ENCODE measurements at regions of chr2 and their contacts with region 1.

Region 1: DNA sequence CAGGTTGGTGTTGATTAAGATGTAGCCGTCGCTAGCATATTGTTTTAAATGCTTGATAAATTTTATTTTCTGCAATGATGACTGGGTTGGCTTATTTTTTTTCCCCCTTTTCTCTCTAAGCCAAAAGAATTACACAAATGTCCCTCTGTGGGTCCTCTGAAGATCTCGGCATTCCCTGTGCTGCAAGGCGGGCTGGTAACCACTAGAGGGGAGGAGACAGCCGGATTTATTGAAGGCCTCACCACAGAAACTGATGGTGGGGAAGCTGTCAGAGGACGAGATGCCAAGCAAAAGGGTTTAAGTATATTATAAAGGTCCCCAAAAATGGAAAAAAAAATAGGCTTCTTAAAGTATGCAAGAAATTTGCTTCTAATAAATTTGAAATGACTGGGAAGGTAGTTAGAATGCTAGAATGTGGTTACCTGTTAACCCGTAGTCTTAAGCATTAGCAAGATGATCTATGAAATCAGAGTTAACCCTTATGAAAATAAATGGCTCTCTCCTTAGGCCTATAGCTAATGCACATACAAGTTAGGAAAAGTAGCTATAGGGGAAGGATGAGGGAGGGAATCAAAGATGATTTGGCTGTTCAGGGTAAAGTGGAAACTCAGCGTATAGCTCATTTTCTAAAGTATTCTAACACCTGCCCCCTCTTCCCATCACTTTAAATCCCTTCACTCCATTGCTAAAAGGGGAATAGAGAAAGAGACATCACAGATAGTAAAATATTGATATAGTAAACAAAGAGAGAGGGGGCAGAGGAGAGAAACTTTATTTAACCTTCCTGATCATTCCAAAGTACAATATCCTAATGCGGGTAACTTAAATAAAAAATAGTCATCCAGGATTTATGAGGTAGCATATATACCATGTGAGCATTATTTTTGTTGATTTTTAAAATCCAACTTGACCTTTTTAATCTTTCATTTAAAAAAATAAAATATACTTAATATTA is 894.5 kb upstream of the POU3F3 start:
- DNase-seq: peak; percentile 35
- H3K4me3 ChIP-seq: peak overlapping the region in 1 of 2 experiments; percentile 33; a peak in 1 of 4 replicates
- H3K27ac ChIP-seq: no peak overlapping the region
- H3K4me1 ChIP-seq: no peaks in the 10 kb centered on the region
- H3K27me3 ChIP-seq: no peaks in the 10 kb centered on the region
- CTCF ChIP-seq: peak; percentile 64
- EP300 ChIP-seq: no peak
- RAD21 ChIP-seq: peak; percentile 73

Region 2: DNA sequence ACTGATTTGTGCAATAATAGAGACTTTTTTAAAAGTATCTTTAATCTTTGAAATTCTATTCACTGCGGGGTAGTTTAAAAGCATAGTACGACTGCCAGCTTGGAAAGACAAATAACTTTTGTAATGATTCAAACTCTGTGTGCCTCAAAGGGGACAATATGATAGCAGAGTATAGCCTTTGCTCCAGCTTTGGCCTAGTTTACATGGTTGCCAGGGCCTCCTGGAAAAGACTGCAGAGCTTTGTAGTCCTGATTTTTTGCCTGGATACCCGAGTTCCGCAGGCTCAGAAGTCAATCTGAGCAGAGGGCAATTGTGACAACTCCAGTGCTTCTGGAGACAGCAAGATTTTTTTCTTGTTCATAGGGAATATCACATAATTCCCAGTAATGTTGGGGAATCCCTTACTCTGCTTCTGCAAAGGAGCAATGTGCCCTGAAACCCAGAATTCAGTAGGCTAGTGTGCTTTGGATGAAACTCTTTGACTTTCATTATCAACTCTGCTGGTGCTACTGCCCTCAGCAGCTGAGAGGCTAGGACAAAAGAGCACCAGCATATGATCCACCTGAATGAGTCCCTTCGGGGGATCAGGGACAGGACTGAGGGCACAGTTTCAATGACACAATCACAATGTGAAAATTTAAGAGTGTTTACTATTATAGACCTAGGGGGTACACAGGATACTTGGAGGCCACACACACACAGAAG is 429.5 kb before region 1 on chr2:
- CTCF ChIA-PET with region 1: no interaction called
- POLR2A ChIA-PET with region 1: no interaction called
- DNase-seq: no peak
- H3K4me3 ChIP-seq: no peak overlapping the region
- H3K27ac ChIP-seq: no peak overlapping the region
- H3K4me1 ChIP-seq: no peaks in the 10 kb centered on the region
- H3K27me3 ChIP-seq: no peaks in the 10 kb centered on the region
- CTCF ChIP-seq: no peak
- EP300 ChIP-seq: no peak
- RAD21 ChIP-seq: no peak

Region 3: DNA sequence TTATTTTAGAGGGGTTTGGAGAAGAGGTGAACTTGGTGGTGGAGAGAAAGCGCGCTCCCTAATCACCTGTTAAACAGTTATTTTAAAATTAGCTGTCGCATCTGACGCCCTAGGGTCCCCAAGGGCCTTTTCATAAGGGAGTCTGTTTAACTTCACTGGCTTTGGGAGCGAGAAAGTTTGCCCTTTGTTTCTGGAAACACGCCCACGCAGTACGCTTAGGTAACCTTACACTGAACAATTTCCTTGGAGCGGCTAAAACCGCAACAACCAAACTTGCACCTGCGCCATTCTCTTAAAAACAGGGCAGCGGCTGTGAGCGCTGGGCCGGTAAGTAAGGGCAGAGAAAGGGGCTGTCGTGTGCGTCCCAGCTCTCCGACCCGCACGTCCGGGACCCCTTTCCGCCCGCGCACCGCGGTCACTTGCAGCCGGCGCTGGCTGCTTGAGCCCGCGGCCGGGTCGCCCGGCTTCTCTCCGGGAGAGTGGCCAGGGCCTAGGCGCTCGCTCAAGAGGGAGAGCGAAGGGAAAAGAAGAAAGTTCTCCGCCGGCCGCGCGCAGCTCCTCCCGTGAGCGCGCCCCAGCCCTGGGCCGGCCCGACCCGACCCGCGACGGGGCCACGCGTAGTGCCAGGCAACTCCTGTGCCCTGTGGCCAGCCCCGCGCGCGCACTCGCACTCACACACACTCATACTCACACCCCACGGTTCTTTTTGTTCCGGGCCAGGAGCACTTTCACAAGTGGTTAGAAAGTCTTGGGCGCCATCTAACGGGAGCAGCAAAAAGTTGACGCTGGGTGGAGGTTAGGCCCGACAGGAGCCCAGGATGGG is 913.6 kb after region 1 on chr2:
- CTCF ChIA-PET with region 1: interaction called, 22 read pairs
- POLR2A ChIA-PET with region 1: no interaction called
- DNase-seq: peak; percentile 81
- H3K4me3 ChIP-seq: peak overlapping the region; percentile 53 to 64
- H3K27ac ChIP-seq: no peak overlapping the region
- H3K4me1 ChIP-seq: peaks cover 0 to 3% of the 10 kb centered on the region in 2 experiments; a peak in 1 of 4 replicates
- H3K27me3 ChIP-seq: peaks cover 25% of the 10 kb centered on the region
- CTCF ChIP-seq: peak; percentile 66
- EP300 ChIP-seq: no peak
- RAD21 ChIP-seq: peak; percentile 79

Region 4: DNA sequence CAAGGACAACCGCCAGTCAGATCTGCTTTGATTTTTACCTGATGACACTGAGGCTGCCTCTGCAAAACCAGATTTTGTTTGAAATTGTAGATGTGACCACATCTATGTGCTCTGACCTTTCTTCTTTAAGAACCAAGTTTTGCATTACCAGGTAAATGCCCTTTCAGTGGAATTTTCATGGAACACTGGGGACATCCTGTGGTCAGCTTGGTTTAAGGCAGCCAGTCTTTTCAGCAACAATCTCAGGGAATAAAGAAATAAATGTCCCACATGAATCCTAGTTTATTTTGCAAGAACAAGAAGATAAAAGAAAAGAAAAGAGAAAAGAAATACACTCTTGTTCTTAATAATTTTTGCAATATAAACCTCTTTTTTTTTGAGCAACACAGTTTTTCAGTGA is 985.0 kb after region 1 on chr2:
- CTCF ChIA-PET with region 1: interaction called, 10 read pairs
- POLR2A ChIA-PET with region 1: no interaction called
- DNase-seq: peak; percentile 35
- H3K4me3 ChIP-seq: no peak overlapping the region
- H3K27ac ChIP-seq: no peak overlapping the region
- H3K4me1 ChIP-seq: no peaks in the 10 kb centered on the region; a peak in 1 of 4 replicates
- H3K27me3 ChIP-seq: 0 out of 2 replicates have a peak, but pooled peaks cover 4% of the 10 kb centered on the region
- CTCF ChIP-seq: peak; percentile 56
- EP300 ChIP-seq: no peak
- RAD21 ChIP-seq: peak; percentile 76